PC-3 (cell line): ENCODE measurements at regions of chr6 and their contacts with region 1.

Region 1: GRCh38 chr6:25100288-25100687 is 164.5 kb upstream of the RIPOR2 start:
- DNase-seq: peak; percentile 81
- ATAC-seq: peak; percentile 93
- H3K4me3 ChIP-seq: peak overlapping the region; percentile 28; the same call in 1 of the 2 replicates
- H3K27ac ChIP-seq: peak overlapping the region; percentile 46
- H3K4me1 ChIP-seq: peaks cover 24% of the 10 kb centered on the region
- H3K27me3 ChIP-seq: no peaks in the 10 kb centered on the region
- CTCF ChIP-seq: no peak

Region 2: DNA sequence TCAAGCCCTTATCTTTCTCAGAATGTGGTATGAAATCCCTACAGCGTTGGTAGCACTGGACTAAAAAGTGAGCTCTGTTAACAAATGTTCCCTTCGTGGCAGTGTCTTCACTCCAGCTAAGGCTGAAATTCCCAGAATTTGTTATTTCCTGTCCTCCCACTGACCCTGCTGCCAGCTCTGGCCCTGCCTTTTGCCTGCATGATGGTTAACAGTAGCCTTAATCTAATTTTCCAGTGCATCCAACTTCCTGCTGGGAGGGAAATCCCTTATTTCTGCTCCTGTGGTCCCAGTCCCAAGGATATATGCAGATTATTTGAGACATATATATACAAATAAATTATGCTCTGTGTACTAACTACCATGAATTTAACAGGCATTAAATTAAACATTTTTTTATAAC is 21.7 kb after region 1 on chr6:
- CTCF ChIA-PET with region 1: no interaction called
- POLR2A ChIA-PET with region 1: no interaction called
- intact Hi-C with region 1: loop called (anchors 1 kb)
- DNase-seq: no peak
- ATAC-seq: no peak
- H3K4me3 ChIP-seq: no peak overlapping the region
- H3K27ac ChIP-seq: no peak overlapping the region
- H3K4me1 ChIP-seq: no peaks in the 10 kb centered on the region
- H3K27me3 ChIP-seq: no peaks in the 10 kb centered on the region
- CTCF ChIP-seq: no peak

Region 3: GRCh38 chr6:25173951-25174474 is 73.7 kb after region 1 on chr6:
- CTCF ChIA-PET with region 1: no interaction called
- POLR2A ChIA-PET with region 1: no interaction called
- intact Hi-C with region 1: loop called (anchors 1 kb)
- DNase-seq: peak; percentile 96
- ATAC-seq: peak; percentile 84
- H3K4me3 ChIP-seq: no peak overlapping the region
- H3K27ac ChIP-seq: peak overlapping the region; percentile 81
- H3K4me1 ChIP-seq: peaks cover 57% of the 10 kb centered on the region
- H3K27me3 ChIP-seq: no peaks in the 10 kb centered on the region
- CTCF ChIP-seq: no peak